Ovary (tissue), 10 donors: ENCODE measurements at regions of chr1 and their contacts with region 1.

Region 1: GRCh38 chr1:214341932-214342331 is 61.0 kb downstream of the SMYD2 start:
- DNase-seq: no peak
- H3K4me3 ChIP-seq: no peak overlapping the region
- H3K27ac ChIP-seq: no peak overlapping the region
- H3K4me1 ChIP-seq: peaks cover 1% of the 10 kb centered on the region
- H3K27me3 ChIP-seq: no peaks in the 10 kb centered on the region
- CTCF ChIP-seq: no peak
- EP300 ChIP-seq: no peak
- POLR2A ChIP-seq: no peak

Region 2: DNA sequence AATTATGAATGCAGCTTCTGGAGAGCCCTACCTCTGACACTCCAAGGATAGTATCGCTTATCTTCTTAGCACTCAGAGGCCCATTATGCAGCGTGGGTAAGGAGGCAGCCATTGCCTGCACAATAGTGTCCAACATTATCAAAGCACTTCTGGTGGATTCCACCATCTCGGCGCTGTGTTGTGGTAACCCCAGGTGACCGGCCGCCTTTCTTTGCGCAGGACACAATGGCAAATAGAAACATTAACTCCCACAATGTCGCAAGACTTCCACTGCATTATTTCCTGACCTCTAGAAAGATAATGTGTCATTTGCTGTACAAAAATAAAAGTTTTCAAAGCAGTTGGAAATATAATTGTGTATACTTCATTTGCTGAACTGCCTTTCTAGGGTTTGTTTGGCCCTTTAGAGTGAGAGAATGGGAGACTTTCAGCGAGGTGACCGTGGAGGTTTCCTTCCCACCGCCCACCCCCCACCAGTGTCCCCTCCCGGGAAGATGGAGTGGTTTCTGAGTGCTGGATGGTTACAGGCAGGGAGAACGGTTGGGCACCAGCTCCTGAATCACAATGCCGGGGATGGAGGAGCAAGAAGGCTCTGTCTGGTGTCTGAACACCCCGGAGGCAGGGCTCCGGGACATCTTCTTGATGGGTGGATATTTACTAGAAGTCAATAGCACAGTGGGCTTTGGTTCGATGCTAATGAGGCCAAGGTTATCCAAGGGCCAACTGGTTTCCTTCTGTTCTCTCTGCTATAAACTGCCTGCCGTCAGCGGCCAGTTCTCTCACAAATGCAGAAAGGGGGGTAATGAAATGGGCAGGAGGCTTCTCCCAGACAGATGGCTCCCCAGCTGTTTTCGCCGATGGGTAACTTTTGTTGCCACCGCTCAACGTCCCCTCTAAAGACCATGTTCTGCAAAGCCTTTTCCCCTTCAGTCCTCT is 569.5 kb before region 1 on chr1:
- intact Hi-C with region 1: no loop called
- DNase-seq: no peak
- H3K4me3 ChIP-seq: no peak overlapping the region
- H3K27ac ChIP-seq: no peak overlapping the region
- H3K4me1 ChIP-seq: no peaks in the 10 kb centered on the region
- H3K27me3 ChIP-seq: no peaks in the 10 kb centered on the region
- CTCF ChIP-seq: no peak
- EP300 ChIP-seq: no peak
- POLR2A ChIP-seq: no peak

Region 3: DNA sequence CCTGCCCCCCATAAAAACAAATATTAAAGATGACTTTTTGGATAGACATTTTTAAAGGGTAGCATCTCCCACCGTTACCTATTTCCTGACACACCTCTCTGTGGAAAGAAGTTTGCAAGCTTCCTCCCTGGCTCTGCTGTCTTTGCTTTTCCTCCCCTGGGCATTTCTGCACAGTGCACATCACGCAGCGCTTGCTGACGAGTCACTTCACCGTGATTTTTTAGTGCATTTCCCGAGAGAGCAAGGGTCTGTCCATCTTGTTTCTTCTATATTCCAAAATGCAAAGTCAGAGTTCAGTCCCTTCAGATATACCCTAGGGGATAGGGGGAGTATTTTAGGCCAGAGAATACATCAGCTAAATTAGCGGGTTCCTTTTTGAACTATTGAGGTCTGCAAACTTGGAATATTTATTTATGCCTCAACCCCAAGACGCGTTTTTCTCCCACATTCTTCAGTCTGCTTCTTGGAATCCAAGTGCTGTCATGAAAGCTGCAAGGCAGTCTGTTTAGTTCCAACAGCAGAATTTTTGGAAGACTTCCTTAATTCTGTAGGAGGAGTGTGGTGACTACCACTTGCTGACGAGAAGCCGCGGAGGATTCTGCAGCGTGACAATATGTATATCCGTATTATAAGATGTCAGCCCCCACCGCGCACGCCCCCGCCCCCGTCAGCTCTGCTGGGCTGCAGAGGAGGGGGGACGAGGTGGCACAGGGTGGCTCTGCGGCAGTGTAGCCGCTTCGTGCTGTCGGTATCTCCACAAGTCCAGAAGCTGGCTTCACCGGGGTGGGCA is 38.6 kb before region 1 on chr1:
- intact Hi-C with region 1: no loop called
- DNase-seq: no peak
- H3K4me3 ChIP-seq: no peak overlapping the region
- H3K27ac ChIP-seq: no peak overlapping the region
- H3K4me1 ChIP-seq: no peaks in the 10 kb centered on the region
- H3K27me3 ChIP-seq: no peaks in the 10 kb centered on the region
- CTCF ChIP-seq: no peak
- EP300 ChIP-seq: no peak
- POLR2A ChIP-seq: no peak

Region 4: DNA sequence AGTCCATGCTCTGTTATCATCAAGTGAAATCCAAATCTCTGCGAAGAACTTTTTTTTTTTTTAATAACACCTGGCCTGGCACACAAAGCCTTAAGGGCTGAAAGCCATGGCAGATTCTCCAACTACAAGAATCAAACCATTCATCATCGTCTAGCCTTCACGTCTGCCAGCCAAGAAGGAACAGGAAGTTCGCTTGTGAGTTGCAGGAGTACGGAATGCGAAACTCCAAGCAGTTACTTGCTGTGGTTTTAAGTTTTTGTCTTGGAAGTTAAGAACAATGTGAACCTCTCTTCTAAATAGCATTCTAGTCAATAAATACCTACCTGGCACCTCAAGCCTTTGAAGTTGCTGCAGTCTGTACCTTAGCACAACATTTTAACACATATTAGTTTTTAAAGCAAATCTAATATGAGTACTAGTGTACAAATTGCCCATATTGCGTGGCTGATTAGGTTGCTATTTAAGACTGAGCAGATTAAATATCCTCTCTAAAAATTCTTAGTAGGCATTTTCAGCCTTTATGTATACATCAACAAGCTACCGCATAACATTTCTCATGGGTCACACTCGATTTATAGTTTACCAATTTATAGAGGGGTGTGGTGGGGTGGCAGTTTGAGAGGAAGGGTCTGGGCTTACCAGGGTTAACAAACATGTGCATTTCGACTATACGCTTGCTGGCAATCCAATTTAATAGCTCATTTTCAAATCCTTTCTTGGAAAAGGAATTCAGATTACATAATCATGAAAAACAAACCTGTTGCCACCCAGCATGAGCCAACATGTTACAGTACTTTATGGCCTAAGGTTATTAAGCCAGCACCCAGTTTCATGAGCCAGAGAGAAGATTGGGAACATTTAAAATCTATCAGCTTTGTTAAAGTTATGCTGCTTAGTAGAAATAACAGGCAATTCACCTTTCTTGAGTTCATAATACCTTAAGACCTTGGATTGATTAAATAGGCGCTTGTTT is 231.7 kb after region 1 on chr1:
- intact Hi-C with region 1: loop called in 1 of 4 experiments (anchors 5 kb)
- DNase-seq: no peak
- H3K4me3 ChIP-seq: no peak overlapping the region
- H3K27ac ChIP-seq: no peak overlapping the region
- H3K4me1 ChIP-seq: peaks cover 7% of the 10 kb centered on the region
- H3K27me3 ChIP-seq: no peaks in the 10 kb centered on the region
- CTCF ChIP-seq: no peak
- EP300 ChIP-seq: no peak
- POLR2A ChIP-seq: no peak